Left cardiac atrium (tissue), 4 donors: ENCODE measurements at regions of chr11 and their contacts with region 1.

Region 1: GRCh38 chr11:114953039-114953438 is 274.7 kb downstream of the NXPE2 start:
- DNase-seq: no peak
- ATAC-seq: peak in 1 of 2 donors; percentile 35

Region 2: DNA sequence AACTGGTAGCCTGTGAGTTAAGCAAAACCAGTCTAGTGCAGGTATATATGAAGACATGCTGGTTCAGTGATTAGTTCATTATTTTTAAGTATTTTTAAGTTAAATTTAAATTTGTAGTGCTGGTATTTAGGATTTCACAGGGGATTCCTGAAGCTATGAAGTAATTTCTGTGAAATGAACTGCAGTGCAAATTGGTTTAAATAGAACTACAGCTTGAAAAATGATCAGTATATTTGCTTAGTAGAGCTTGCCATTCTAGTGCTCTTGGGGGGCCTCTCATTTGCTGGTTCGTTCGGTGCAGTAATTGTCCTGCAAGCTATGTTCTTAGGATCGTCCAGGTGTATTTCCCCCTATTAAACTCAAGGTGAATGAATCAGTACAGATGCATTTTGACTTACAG is 500.6 kb before region 1 on chr11:
- intact Hi-C with region 1: no loop called
- DNase-seq: no peak
- ATAC-seq: no peak

Region 3: DNA sequence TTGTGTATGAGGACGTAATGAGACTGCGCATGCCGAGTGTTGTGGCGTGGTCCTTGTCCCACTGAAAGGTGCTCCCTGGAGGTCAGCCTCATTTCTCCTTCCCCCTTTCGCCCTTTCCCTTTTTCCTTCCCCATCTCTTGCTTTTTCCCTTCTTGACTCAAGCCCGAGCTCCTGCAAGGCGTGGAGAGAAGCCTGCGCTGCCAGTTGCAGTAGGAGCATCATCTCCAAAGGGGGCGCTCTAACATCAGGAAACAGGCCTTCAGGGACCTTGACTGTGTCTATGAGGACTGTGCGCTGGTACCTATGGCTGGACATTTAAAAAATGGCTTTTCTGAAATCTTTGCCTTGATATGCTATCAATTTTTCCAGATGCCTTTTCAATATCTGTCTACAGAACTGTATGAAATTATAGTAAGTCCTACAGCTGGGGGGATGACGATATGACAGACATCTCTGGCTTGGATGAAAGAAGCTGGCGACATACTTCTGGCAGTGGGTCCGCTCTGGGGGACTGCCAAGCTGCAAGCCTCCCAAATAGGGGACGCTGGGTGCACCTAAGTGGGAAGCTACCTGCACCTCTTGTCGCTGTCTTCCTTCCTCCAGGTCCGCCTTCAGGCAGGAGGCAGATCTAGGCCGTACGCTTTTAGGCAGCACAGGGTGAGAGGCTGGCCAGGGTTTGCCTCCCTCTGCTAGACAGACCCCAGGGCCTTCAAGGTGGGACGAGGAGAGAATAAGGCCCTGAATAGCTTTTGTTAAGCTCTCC is 178.3 kb before region 1 on chr11:
- intact Hi-C with region 1: loop called (anchors 5 to 10 kb)
- DNase-seq: peak; percentile 30
- ATAC-seq: peak; percentile 65 to 70

Region 4: GRCh38 chr11:114796954-114797721 is 155.9 kb before region 1 on chr11:
- intact Hi-C with region 1: loop called in 1 of 2 experiments (anchors 5 kb)
- DNase-seq: no peak
- ATAC-seq: peak; percentile 67 to 89

Region 5: GRCh38 chr11:114987186-114987760 is 34.2 kb after region 1 on chr11:
- intact Hi-C with region 1: no loop called
- DNase-seq: no peak
- ATAC-seq: no peak